ENCODE measurements at regions of chr3 and their contacts with region 1.

Region 1: GRCh38 chr3:4939276-4939675 is 40.0 kb upstream of the BHLHE40 start:
- DNase-seq: no peak
- ATAC-seq: no peak
- H3K4me3 ChIP-seq: no peak overlapping the region
- H3K27ac ChIP-seq: no peak overlapping the region
- H3K4me1 ChIP-seq: peaks cover 20% of the 10 kb centered on the region
- H3K27me3 ChIP-seq: no peaks in the 10 kb centered on the region
- CTCF ChIP-seq: no peak

Region 2: DNA sequence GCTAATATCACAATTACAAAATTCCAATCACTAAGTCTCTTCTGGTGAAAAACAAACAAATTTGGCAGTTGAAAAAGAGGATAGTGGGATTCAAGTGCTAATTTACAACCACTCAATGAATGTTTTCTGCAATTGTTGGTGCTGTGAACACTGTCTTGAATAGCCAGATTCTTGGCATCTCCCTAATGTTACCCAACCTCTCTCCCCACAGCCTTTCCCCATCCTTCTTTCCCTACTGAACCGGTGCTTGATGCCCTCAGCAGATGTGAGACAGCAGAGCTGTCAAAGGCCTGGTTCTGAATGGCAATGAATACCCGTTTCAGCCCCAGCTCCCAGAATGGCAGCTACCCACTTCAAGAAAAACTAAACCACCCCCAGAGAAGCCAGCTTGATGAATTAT is 17.5 kb after region 1 on chr3:
- CTCF ChIA-PET with region 1: no interaction called
- POLR2A ChIA-PET with region 1: interaction called, 26 read pairs
- intact Hi-C with region 1: no loop called
- DNase-seq: no peak
- ATAC-seq: no peak
- H3K4me3 ChIP-seq: no peak overlapping the region
- H3K27ac ChIP-seq: no peak overlapping the region
- H3K4me1 ChIP-seq: no peaks in the 10 kb centered on the region
- H3K27me3 ChIP-seq: no peaks in the 10 kb centered on the region
- CTCF ChIP-seq: no peak

Measured in PC-3 (cell line).